Naive thymus-derived CD4-positive, alpha-beta T cell (primary cell): ENCODE measurements at regions of chr7 and their contacts with region 1.

Region 1: GRCh38 chr7:23055582-23056178 is 41.8 kb upstream of the HYCC1 start:
- DNase-seq: peak in 8 of 9 donors; percentile 42 to 71 (median 64)
- ATAC-seq: peak; percentile 98
- H3K4me3 ChIP-seq: no peak overlapping the region
- H3K4me3 Mint-ChIP-seq: no peak overlapping the region
- H3K27ac ChIP-seq: no peak overlapping the region
- H3K27ac Mint-ChIP-seq: no peak overlapping the region
- H3K4me1 ChIP-seq: no peaks in the 10 kb centered on the region
- H3K4me1 Mint-ChIP-seq: peaks cover 0 to 10% (median 0%) of the 10 kb centered on the region in 7 donors
- H3K27me3 ChIP-seq: no peaks in the 10 kb centered on the region
- H3K27me3 Mint-ChIP-seq: peaks cover 0 to 7% (median 0%) of the 10 kb centered on the region in 5 donors

Region 2: DNA sequence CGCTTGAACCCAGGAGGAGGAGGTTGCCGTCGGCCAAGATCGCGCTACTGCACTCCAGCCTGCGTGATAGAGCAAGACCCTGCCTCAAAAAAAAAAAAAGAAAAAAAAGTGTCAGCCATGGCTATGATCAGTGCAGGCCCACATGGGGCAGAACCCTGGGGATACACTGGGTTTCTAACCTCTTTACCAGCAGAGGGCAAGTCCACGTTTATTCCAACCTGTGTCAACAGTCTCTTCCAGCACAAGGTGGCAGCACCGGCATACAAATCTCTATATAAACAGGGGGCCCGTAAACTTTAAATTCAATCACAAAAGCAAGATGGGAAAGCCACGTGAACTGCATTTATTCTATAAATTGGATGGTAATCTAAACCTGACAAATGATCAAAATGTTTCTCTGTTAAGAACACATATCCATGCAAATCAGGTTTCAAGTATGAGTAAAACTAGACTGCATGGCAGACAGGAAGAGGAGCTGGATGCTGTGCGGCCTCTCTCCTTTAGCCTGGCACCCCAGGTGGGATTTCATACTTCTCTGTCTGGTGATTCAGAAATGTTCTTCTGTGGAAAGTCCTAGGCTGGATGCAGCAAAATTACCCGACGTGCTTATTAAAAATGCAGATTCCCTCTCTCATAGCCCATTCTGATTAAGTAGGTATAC is 495.7 kb before region 1 on chr7:
- CTCF ChIA-PET with region 1: interaction called, 61 read pairs
- POLR2A ChIA-PET with region 1: interaction called, 3 read pairs
- intact Hi-C with region 1: loop called (anchors 1 kb)
- DNase-seq: peak in 8 of 9 donors; percentile 48 to 77 (median 66)
- ATAC-seq: peak; percentile 94
- H3K4me3 ChIP-seq: no peak overlapping the region
- H3K4me3 Mint-ChIP-seq: no peak overlapping the region
- H3K27ac ChIP-seq: no peak overlapping the region
- H3K27ac Mint-ChIP-seq: peak overlapping the region in 1 of 9 donors; percentile 3
- H3K4me1 ChIP-seq: peaks cover 19 to 22% of the 10 kb centered on the region in 2 donors
- H3K4me1 Mint-ChIP-seq: peaks cover 18 to 44% (median 25%) of the 10 kb centered on the region in 7 donors
- H3K27me3 ChIP-seq: no peaks in the 10 kb centered on the region
- H3K27me3 Mint-ChIP-seq: peaks cover 5 to 16% (median 9%) of the 10 kb centered on the region in 5 donors

Region 3: DNA sequence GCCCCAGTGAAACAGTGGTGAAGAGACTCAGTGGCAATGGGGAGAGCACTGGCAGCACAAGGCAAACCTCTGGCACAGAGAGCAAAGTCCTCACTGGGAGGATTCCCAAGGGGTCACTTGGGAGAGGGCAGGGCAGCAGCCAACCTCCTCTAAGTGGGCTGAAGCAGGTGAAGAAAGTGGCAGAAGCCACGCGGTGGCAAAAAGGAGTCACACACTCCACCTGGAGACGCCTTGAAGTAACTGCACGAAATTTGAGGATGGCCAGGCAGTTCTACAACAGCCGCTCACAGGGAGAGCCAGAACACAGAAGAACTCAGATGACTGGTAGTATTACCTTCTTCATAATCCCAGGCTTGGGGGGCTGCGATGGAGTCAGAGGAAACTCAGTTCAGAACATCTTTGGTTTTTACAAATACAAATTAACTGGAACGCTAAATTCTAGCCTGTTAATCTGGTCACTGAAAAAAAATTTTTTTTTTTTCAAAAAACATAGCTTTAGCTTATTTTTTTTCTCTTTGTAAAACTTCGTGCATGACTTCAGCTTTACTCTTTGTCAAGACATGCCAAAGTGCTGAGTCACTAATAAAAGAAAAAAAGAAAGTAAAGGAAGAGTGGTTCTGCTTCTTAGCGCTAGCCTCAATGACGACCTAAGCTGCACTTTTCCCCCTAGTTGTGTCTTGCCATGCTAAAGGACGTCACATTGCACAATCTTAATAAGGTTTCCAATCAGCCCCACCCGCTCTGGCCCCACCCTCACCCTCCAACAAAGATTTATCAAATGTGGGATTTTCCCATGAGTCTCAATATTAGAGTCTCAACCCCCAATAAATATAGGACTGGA is 329.1 kb before region 1 on chr7:
- CTCF ChIA-PET with region 1: interaction called, 8 read pairs
- POLR2A ChIA-PET with region 1: no interaction called
- intact Hi-C with region 1: loop called (anchors 1 kb)
- DNase-seq: peak; percentile 19 to 67 (median 49)
- ATAC-seq: peak; percentile 84
- H3K4me3 ChIP-seq: no peak overlapping the region
- H3K4me3 Mint-ChIP-seq: peak overlapping the region; percentile 72 to 84 (median 78)
- H3K27ac ChIP-seq: no peak overlapping the region
- H3K27ac Mint-ChIP-seq: peak overlapping the region in 2 of 9 donors; percentile 15 to 41
- H3K4me1 ChIP-seq: peaks cover 0 to 5% of the 10 kb centered on the region in 2 donors
- H3K4me1 Mint-ChIP-seq: peaks cover 7 to 42% (median 21%) of the 10 kb centered on the region in 7 donors
- H3K27me3 ChIP-seq: no peaks in the 10 kb centered on the region
- H3K27me3 Mint-ChIP-seq: peaks cover 0 to 55% (median 4%) of the 10 kb centered on the region in 5 donors

Region 4: DNA sequence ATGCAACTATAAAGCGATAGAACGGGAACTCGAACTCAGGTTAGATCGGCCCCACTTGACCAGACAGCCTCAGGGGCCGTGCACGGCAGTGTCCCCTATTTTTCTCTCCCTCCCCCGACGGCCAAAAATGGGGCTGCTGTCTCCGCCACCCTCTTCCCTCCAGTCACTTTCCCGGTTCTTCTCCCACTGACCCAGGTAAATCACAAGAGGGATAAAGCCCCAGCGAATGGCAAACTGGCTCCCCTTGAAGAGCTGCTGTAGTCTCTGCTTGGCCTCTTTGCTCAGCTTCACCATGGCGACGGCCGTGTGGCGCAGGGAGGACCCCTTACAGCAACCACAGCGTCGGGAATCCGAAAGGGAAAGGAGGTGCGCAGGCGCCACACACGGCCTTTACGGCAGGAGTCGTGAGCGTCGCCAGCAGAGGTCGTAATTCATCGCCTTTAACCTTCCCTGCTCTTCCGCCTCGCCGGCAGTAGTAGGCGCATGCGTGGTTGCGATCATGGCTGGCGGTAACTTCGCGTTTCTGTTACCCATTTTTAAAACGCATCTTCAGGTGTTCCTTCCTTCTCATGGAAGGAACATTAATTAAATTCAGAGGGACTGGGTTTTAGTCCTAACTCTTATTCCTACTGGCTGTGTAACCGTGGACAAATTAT is 233.1 kb before region 1 on chr7 and contains the start of gene TOMM7:
- CTCF ChIA-PET with region 1: interaction called, 3 read pairs
- POLR2A ChIA-PET with region 1: no interaction called
- intact Hi-C with region 1: loop called (anchors 1 kb)
- DNase-seq: peak; percentile 68 to 92 (median 90)
- ATAC-seq: peak; percentile 99
- H3K4me3 ChIP-seq: peak within 1 kb of the TSS; percentile 83
- H3K4me3 Mint-ChIP-seq: peak within 1 kb of the TSS; percentile 93 to 100 (median 99)
- H3K27ac ChIP-seq: peak within 1 kb of the TSS; percentile 94
- H3K27ac Mint-ChIP-seq: peak within 1 kb of the TSS; percentile 94 to 100 (median 99)
- H3K4me1 ChIP-seq: peaks cover 6 to 19% of the 10 kb centered on the region in 2 donors
- H3K4me1 Mint-ChIP-seq: peaks cover 15 to 53% (median 43%) of the 10 kb centered on the region in 7 donors
- H3K27me3 ChIP-seq: peaks cover 0 to 4% of the 10 kb centered on the region in 2 donors
- H3K27me3 Mint-ChIP-seq: peaks cover 15 to 36% (median 19%) of the 10 kb centered on the region in 5 donors
- total RNA-seq, gene TOMM7: 302 to 737 (median 649) TPM

Region 5: GRCh38 chr7:22992874-22993840 is 62.5 kb before region 1 on chr7:
- CTCF ChIA-PET with region 1: no interaction called
- POLR2A ChIA-PET with region 1: no interaction called
- intact Hi-C with region 1: loop called in 1 of 2 experiments (anchors 10 kb)
- DNase-seq: no peak
- ATAC-seq: no peak
- H3K4me3 ChIP-seq: no peak overlapping the region
- H3K4me3 Mint-ChIP-seq: peak overlapping the region in 1 of 10 donors; percentile 35
- H3K27ac ChIP-seq: no peak overlapping the region
- H3K27ac Mint-ChIP-seq: peak overlapping the region in 1 of 9 donors; percentile 65
- H3K4me1 ChIP-seq: no peaks in the 10 kb centered on the region
- H3K4me1 Mint-ChIP-seq: peaks cover 0 to 43% (median 13%) of the 10 kb centered on the region in 7 donors
- H3K27me3 ChIP-seq: no peaks in the 10 kb centered on the region
- H3K27me3 Mint-ChIP-seq: no peaks in the 10 kb centered on the region